Activated naive CD4-positive, alpha-beta T cell treated with anti-CD3 and anti-CD28 coated beads for 36 hours (primary cell): ENCODE measurements at regions of chr10 and their contacts with region 1.

Region 1: DNA sequence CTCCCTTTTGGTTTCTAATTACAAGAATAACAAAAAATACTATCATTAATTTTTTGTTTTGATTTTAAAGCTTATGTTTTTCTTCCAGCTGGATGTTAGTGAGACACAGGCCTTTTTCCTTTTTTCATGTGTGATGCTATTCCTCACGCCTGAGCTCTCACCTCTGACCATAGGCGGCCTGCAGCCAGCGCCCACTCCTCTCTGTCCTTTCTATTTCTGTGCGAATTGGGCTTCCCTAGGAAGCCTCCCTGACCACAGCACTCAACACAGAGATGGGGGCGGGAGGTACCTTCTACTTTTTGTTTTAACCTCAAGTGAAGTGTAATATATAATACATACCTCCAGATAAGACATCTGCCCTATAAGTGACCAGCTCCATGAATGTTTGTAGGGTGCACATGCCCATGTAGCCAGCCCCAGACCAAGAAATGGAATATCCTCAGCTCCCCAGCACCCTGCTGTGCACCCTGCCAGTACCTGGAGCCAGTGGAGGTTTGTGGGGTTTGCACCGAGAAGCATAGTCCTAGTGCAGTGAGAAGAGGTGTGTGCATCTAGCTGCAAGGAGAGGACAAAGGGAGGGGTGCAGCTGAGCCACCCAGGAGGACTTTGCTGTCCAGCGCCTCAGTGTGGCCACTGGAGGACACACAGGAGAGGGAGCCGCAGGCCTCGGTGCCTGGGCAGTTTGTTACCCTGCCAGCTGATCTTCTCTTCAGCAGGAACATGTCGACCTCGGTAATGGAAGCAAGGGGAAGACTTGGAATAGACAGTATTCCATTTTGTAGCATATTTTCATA is 38.5 kb downstream of the BNIP3 start:
- DNase-seq: peak; percentile 47
- H3K4me3 Mint-ChIP-seq: no peak overlapping the region
- H3K27ac Mint-ChIP-seq: peak overlapping the region; percentile 36
- H3K4me1 Mint-ChIP-seq: peaks cover 2% of the 10 kb centered on the region
- H3K27me3 Mint-ChIP-seq: no peaks in the 10 kb centered on the region

Region 2: DNA sequence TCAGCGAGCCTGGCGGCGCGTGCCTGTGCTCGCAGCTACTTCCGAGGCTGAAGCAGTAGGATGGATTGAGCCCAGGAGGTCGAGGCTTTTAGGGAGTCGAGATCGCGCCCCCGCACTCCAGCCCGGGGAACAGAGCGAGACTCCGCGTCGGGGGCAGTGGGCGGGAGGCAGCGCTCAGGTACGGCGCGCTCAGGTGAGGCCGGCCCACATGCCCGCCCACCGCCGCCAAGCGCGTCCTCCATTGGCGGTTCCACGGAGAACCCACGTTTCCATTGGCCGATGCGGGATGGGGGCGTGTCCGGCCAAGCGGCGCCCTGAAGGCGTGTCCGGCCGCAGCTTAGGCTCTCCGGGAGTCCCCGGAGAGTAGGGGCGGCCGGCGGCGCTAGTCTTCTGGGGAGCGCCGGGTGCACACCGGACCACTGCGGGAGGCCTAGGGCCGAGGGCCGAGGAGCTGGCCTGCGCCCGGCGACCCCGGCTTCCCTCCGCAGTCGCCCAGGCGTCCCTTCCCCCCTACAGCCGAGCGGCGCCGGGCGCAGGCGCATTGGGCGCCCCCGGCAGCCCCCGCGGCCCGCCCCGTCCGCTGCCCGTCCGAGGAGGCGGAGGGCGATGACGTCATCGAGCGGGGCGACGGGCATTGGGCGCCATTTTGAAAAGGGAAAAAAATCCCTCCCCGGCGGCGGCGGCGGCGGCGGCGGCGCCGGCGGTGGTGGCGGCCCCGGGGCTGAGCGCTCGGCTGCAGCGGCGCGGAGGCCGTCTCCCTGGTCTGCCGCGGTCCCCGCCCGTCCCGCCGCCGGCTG is 42.7 kb before region 1 on chr10 and contains the start of gene PPP2R2D:
- CTCF ChIA-PET with region 1: interaction called, 10 read pairs
- intact Hi-C with region 1: no loop called
- DNase-seq: peak; percentile 94
- H3K4me3 Mint-ChIP-seq: peak within 1 kb of the TSS; percentile 87
- H3K27ac Mint-ChIP-seq: peak within 1 kb of the TSS; percentile 92
- H3K4me1 Mint-ChIP-seq: peaks cover 47% of the 10 kb centered on the region
- H3K27me3 Mint-ChIP-seq: peaks cover 4% of the 10 kb centered on the region
- total RNA-seq, gene PPP2R2D: 31.5 to 34.7 TPM